Activated CD4-positive, alpha-beta T cell treated with anti-CD3 and anti-CD28 coated beads, Interleukin-2, amount 10 ng/mL, durations not matched to agents 24 days and 14 days (primary cell): ENCODE measurements at regions of chr6 and their contacts with region 1.

Region 1: GRCh38 chr6:160992061-160992979 is 751 bp downstream of the MAP3K4 start:
- DNase-seq: peak; percentile 81
- H3K4me3 Mint-ChIP-seq: peak overlapping the region; percentile 98
- H3K27ac Mint-ChIP-seq: peak overlapping the region; percentile 94
- H3K4me1 Mint-ChIP-seq: peaks cover 21% of the 10 kb centered on the region
- H3K27me3 Mint-ChIP-seq: peaks cover 15% of the 10 kb centered on the region

Region 2: DNA sequence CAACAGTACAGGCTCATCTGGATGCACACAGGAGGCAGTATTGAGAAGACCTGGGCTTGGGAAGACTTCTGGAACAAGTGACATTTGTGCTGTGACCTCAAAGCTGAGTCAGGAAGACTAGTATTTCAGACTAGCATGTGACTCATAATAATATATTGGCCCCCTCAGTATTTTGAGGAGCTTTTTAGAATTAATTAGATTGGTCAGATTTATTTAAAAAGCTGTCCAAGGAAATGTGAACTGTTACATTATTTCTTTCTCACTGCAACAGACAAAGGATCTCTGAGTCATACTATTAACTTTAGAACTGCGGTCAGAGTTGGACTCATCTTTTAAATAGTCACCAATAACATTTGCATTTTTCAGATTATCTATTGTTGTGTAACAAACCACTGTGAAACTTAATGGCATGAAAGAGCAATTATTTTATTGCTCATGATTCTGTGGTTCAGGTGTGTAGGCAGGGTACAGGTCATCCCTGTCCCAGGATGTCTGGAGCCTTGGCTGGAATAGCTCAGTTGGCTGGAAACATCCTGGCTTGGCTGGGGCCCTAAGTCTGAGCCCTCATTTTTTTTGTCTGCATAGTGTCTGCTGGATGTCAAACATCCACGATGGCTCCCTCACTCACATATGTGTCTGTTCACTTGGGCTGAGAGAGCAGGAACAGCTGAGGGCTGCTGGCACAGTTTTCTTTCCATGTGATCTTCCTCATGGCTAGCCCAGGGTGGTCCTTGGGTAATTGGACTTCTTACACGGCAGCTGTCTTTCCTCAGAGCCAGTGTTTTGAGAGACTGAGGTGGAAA is 46.1 kb after region 1 on chr6:
- intact Hi-C with region 1: loop called (anchors 5 kb)
- DNase-seq: no peak
- H3K4me3 Mint-ChIP-seq: no peak overlapping the region
- H3K27ac Mint-ChIP-seq: peak overlapping the region; percentile 1
- H3K4me1 Mint-ChIP-seq: peaks cover 6% of the 10 kb centered on the region
- H3K27me3 Mint-ChIP-seq: no peaks in the 10 kb centered on the region

Region 3: DNA sequence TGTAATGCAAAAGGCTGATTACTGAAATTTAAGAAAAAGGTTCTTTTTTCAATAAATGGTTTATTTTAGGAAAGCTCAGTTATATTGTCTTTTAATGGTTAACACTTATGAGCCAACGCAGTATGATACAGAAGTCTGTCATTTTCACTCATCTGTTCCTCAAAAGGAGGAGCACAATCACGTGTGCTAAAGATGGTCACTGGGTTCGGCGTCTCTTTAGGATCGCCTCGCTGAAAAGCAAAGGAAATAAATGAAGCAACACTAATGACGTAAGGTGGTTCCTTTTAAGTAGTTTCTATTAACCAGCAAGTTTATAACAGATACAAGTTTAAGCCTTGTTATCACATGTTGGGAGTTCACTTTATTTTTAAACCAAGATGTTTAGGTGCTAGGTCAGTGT is 125.0 kb after region 1 on chr6:
- intact Hi-C with region 1: loop called (anchors 5 kb)
- DNase-seq: no peak
- H3K4me3 Mint-ChIP-seq: no peak overlapping the region
- H3K27ac Mint-ChIP-seq: no peak overlapping the region
- H3K4me1 Mint-ChIP-seq: peaks cover 5% of the 10 kb centered on the region
- H3K27me3 Mint-ChIP-seq: no peaks in the 10 kb centered on the region

Region 4: GRCh38 chr6:161151660-161152526 is 159.6 kb after region 1 on chr6:
- intact Hi-C with region 1: no loop called
- DNase-seq: no peak
- H3K4me3 Mint-ChIP-seq: no peak overlapping the region
- H3K27ac Mint-ChIP-seq: no peak overlapping the region
- H3K4me1 Mint-ChIP-seq: no peaks in the 10 kb centered on the region
- H3K27me3 Mint-ChIP-seq: no peaks in the 10 kb centered on the region

Region 5: GRCh38 chr6:161273752-161274487 is 281.6 kb after region 1 on chr6 and contains the start of gene AGPAT4:
- intact Hi-C with region 1: loop called (anchors 2 kb)
- DNase-seq: peak; percentile 93
- H3K4me3 Mint-ChIP-seq: peak within 1 kb of the TSS; percentile 92
- H3K27ac Mint-ChIP-seq: peak within 1 kb of the TSS; percentile 95
- H3K4me1 Mint-ChIP-seq: peaks cover 26% of the 10 kb centered on the region
- H3K27me3 Mint-ChIP-seq: peaks cover 13% of the 10 kb centered on the region
- total RNA-seq, gene AGPAT4: 6.8 and 7.1 TPM in 2 replicates

Region 6: GRCh38 chr6:162727309-162728182 is 1735.2 kb after region 1 on chr6 and contains the starts of genes PACRG and PRKN:
- intact Hi-C with region 1: loop called (anchors 5 kb)
- DNase-seq: peak; percentile 99
- H3K4me3 Mint-ChIP-seq: peak within 1 kb of the TSS; percentile 92
- H3K27ac Mint-ChIP-seq: peak within 1 kb of the TSS; percentile 91
- H3K4me1 Mint-ChIP-seq: peaks cover 6% of the 10 kb centered on the region
- H3K27me3 Mint-ChIP-seq: peaks cover 3% of the 10 kb centered on the region
- total RNA-seq, gene PACRG: not detected in 2 replicates
- total RNA-seq, gene PRKN: not detected in 2 replicates